CD8-positive, alpha-beta T cell (primary cell): ENCODE measurements at regions of chr7 and their contacts with region 1.

Region 1: GRCh38 chr7:33307205-33307604 is 177.8 kb downstream of the BBS9 start:
- DNase-seq: no peak
- ATAC-seq: no peak
- H3K4me3 ChIP-seq: no peak overlapping the region
- H3K4me3 Mint-ChIP-seq: no peak overlapping the region
- H3K27ac ChIP-seq: no peak overlapping the region
- H3K27ac Mint-ChIP-seq: no peak overlapping the region
- H3K4me1 ChIP-seq: no peaks in the 10 kb centered on the region
- H3K4me1 Mint-ChIP-seq: no peaks in the 10 kb centered on the region
- H3K27me3 ChIP-seq: no peaks in the 10 kb centered on the region
- H3K27me3 Mint-ChIP-seq: no peaks in the 10 kb centered on the region
- CTCF ChIP-seq: no peak

Region 2: DNA sequence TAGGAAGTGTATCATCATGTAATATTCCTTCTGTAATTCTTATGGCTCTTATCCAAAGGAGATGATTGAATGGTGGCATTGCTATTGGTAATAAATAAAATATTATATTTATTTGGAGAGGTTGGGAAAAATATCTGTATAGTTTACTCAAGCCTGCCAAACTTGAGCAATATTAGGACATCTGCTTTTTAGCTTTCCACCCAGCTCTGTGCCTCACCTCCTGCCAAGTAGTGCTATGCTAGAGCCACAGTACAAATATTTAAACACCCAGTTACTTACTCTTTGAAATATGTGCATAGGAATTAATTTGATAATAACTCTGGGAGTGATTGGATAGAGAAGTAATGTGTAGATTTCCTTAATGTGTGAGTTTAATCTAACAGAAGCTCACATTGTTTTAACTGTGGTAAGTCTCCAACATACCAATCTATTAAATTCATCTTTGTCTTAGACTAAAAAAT is 48.7 kb before region 1 on chr7:
- CTCF ChIA-PET with region 1: no interaction called
- POLR2A ChIA-PET with region 1: no interaction called
- intact Hi-C with region 1: loop called in 1 of 2 experiments (anchors 5 kb)
- DNase-seq: no peak
- ATAC-seq: no peak
- H3K4me3 ChIP-seq: no peak overlapping the region
- H3K4me3 Mint-ChIP-seq: no peak overlapping the region
- H3K27ac ChIP-seq: no peak overlapping the region
- H3K27ac Mint-ChIP-seq: no peak overlapping the region
- H3K4me1 ChIP-seq: no peaks in the 10 kb centered on the region
- H3K4me1 Mint-ChIP-seq: peaks cover 9% of the 10 kb centered on the region
- H3K27me3 ChIP-seq: no peaks in the 10 kb centered on the region
- H3K27me3 Mint-ChIP-seq: no peaks in the 10 kb centered on the region
- CTCF ChIP-seq: no peak

Region 3: GRCh38 chr7:33339074-33339790 is 32.0 kb after region 1 on chr7:
- CTCF ChIA-PET with region 1: no interaction called
- POLR2A ChIA-PET with region 1: no interaction called
- intact Hi-C with region 1: no loop called
- DNase-seq: no peak
- ATAC-seq: no peak
- H3K4me3 ChIP-seq: no peak overlapping the region
- H3K4me3 Mint-ChIP-seq: no peak overlapping the region
- H3K27ac ChIP-seq: no peak overlapping the region
- H3K27ac Mint-ChIP-seq: no peak overlapping the region
- H3K4me1 ChIP-seq: no peaks in the 10 kb centered on the region
- H3K4me1 Mint-ChIP-seq: no peaks in the 10 kb centered on the region
- H3K27me3 ChIP-seq: no peaks in the 10 kb centered on the region
- H3K27me3 Mint-ChIP-seq: no peaks in the 10 kb centered on the region
- CTCF ChIP-seq: no peak

Region 4: GRCh38 chr7:33350577-33350976 is 43.4 kb after region 1 on chr7:
- CTCF ChIA-PET with region 1: no interaction called
- POLR2A ChIA-PET with region 1: no interaction called
- intact Hi-C with region 1: no loop called
- DNase-seq: no peak
- ATAC-seq: no peak
- H3K4me3 ChIP-seq: no peak overlapping the region
- H3K4me3 Mint-ChIP-seq: no peak overlapping the region
- H3K27ac ChIP-seq: no peak overlapping the region
- H3K27ac Mint-ChIP-seq: no peak overlapping the region
- H3K4me1 ChIP-seq: no peaks in the 10 kb centered on the region
- H3K4me1 Mint-ChIP-seq: no peaks in the 10 kb centered on the region
- H3K27me3 ChIP-seq: no peaks in the 10 kb centered on the region
- H3K27me3 Mint-ChIP-seq: no peaks in the 10 kb centered on the region
- CTCF ChIP-seq: no peak

Region 5: DNA sequence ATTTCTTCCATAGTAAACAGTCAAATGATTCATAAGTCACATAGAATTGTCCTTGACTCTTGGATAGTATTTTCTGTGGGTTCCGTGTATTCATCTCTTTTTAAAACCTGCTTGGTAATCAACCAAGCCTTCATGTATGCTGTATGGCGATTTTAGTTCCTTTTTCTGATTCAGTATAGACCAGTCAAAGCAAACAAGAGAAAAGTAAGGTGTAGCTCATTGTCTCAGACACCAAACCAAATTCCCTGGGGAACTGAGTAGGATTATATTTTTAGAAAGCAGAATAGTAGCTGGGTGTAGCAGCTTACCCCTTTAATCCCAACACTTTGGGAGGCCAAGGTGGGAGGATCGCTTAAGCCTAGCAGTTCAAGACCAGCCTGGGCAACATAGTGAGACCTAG is 62.7 kb after region 1 on chr7:
- CTCF ChIA-PET with region 1: no interaction called
- POLR2A ChIA-PET with region 1: no interaction called
- intact Hi-C with region 1: no loop called
- DNase-seq: no peak
- ATAC-seq: no peak
- H3K4me3 ChIP-seq: no peak overlapping the region
- H3K4me3 Mint-ChIP-seq: no peak overlapping the region
- H3K27ac ChIP-seq: no peak overlapping the region
- H3K27ac Mint-ChIP-seq: no peak overlapping the region
- H3K4me1 ChIP-seq: no peaks in the 10 kb centered on the region
- H3K4me1 Mint-ChIP-seq: no peaks in the 10 kb centered on the region
- H3K27me3 ChIP-seq: no peaks in the 10 kb centered on the region
- H3K27me3 Mint-ChIP-seq: no peaks in the 10 kb centered on the region
- CTCF ChIP-seq: no peak

Region 6: DNA sequence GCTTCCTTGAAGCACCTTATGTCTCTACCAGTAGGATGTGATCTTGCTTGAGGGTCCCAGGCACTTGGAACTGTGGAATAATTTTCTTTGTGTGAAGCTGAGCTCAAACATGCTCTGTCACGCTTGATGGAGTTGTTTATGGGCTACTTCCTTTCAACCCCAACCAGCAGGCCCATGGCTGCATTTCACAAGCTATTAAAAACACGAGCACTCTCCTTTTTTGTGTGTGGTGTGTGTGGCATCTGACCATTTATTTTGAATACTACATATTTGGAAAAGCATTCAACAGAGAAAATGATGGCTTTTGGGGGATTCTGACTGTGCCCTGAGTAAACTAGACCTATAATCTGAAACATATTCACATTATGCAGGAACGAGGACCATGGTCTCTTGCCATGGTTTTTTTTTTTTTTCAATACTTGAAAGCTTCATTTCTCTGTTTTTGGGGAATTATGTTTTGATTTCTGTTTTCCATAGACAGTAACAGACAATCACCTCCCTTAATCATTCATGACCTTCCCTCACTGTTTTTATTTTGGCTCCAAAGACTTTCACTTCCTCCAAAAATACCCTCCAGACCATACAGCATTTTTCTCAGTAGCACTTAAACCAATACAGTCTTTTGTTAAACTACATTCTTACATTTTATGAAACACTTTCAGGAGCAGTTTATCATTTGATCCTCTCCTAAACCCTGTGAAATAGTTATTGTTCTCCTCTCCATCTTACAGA is 364.5 kb after region 1 on chr7:
- CTCF ChIA-PET with region 1: no interaction called
- POLR2A ChIA-PET with region 1: no interaction called
- intact Hi-C with region 1: no loop called
- DNase-seq: no peak
- ATAC-seq: no peak
- H3K4me3 ChIP-seq: no peak overlapping the region
- H3K4me3 Mint-ChIP-seq: no peak overlapping the region
- H3K27ac ChIP-seq: no peak overlapping the region
- H3K27ac Mint-ChIP-seq: no peak overlapping the region
- H3K4me1 ChIP-seq: no peaks in the 10 kb centered on the region
- H3K4me1 Mint-ChIP-seq: no peaks in the 10 kb centered on the region
- H3K27me3 ChIP-seq: no peaks in the 10 kb centered on the region
- H3K27me3 Mint-ChIP-seq: no peaks in the 10 kb centered on the region
- CTCF ChIP-seq: no peak